H1 (cell line): ENCODE measurements at regions of chr10 and their contacts with region 1.

Region 1: GRCh38 chr10:13414894-13415293 is 66.8 kb upstream of the SEPHS1 start:
- DNase-seq: peak in 1 of 2 experiments; percentile 77
- H3K4me3 ChIP-seq: no peak overlapping the region
- H3K27ac ChIP-seq: no peak overlapping the region
- H3K4me1 ChIP-seq: no peaks in the 10 kb centered on the region
- H3K27me3 ChIP-seq: no peaks in the 10 kb centered on the region; a peak in 1 of 7 replicates
- CTCF ChIP-seq: peak; percentile 68 to 79 (median 75)
- EP300 ChIP-seq: no peak
- POLR2A ChIP-seq: no peak
- RAD21 ChIP-seq: peak; percentile 56 to 74

Region 2: GRCh38 chr10:13399236-13399635 is 15.7 kb before region 1 on chr10:
- CTCF ChIA-PET with region 1: interaction called, 45 read pairs
- POLR2A ChIA-PET with region 1: interaction called, 3 read pairs
- DNase-seq: no peak
- H3K4me3 ChIP-seq: no peak overlapping the region
- H3K27ac ChIP-seq: no peak overlapping the region
- H3K4me1 ChIP-seq: peaks cover 1 to 9% (median 5%) of the 10 kb centered on the region in 4 experiments; a peak in 6 of 7 replicates
- H3K27me3 ChIP-seq: no peaks in the 10 kb centered on the region
- CTCF ChIP-seq: peak in 1 of 3 experiments; percentile 10; a peak in 1 of 4 replicates
- EP300 ChIP-seq: no peak
- POLR2A ChIP-seq: no peak
- RAD21 ChIP-seq: no peak; a peak in 1 of 4 replicates

Region 3: GRCh38 chr10:13404305-13404759 is 10.6 kb before region 1 on chr10:
- CTCF ChIA-PET with region 1: interaction called, 45 read pairs
- POLR2A ChIA-PET with region 1: interaction called, 3 read pairs
- DNase-seq: no peak
- H3K4me3 ChIP-seq: no peak overlapping the region
- H3K27ac ChIP-seq: no peak overlapping the region
- H3K4me1 ChIP-seq: peaks cover 0 to 7% (median under 1%) of the 10 kb centered on the region in 4 experiments; a peak in 3 of 7 replicates
- H3K27me3 ChIP-seq: no peaks in the 10 kb centered on the region
- CTCF ChIP-seq: no peak
- EP300 ChIP-seq: no peak
- POLR2A ChIP-seq: no peak
- RAD21 ChIP-seq: no peak

Region 4: GRCh38 chr10:13485623-13486022 is 70.7 kb after region 1 on chr10:
- CTCF ChIA-PET with region 1: interaction called, 14 read pairs
- POLR2A ChIA-PET with region 1: no interaction called
- DNase-seq: no peak
- H3K4me3 ChIP-seq: no peak overlapping the region
- H3K27ac ChIP-seq: no peak overlapping the region
- H3K4me1 ChIP-seq: peaks cover 0 to 6% (median 2%) of the 10 kb centered on the region in 4 experiments; a peak in 3 of 7 replicates
- H3K27me3 ChIP-seq: peaks cover 0 to 1% (median 0%) of the 10 kb centered on the region in 4 experiments; a peak in 1 of 7 replicates
- CTCF ChIP-seq: no peak
- EP300 ChIP-seq: no peak
- POLR2A ChIP-seq: no peak
- RAD21 ChIP-seq: no peak